CD4-positive, alpha-beta memory T cell (primary cell): ENCODE measurements at regions of chr1 and their contacts with region 1.

Region 1: DNA sequence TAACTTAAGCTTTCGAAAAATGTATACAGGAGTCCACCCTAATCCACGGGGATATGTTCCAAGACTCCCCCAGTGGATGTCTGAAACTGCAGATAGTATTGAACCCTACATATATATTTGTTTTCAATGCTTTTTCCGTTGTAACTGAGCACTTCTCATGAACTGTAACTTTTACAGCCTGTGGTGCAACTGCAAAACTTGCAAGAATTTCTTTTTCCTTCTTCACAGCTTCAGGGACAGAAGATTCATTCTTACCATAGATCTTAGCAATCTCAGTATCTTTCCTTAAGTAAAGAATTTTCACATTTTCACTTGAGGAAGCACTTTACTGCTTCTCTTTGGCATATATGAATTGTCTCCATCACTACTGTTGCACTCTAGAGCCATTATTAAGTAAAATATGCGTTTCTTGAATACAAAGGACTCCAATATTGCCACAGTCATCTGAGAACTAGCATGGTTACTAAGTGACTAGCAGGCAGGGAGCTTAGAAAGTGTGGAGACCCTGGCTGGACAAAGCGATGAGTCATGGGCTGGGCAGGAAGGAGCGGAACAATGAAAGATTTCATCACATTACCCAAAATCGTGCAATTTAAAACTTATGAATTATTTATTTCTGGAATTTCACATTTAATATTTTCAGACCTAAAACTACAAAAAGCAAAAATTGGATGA is 14.1 kb downstream of the DPYD start:
- DNase-seq: no peak
- H3K4me3 ChIP-seq: no peak overlapping the region
- H3K4me3 Mint-ChIP-seq: no peak overlapping the region
- H3K27ac ChIP-seq: no peak overlapping the region
- H3K27ac Mint-ChIP-seq: no peak overlapping the region
- H3K4me1 ChIP-seq: peaks cover 15% of the 10 kb centered on the region
- H3K4me1 Mint-ChIP-seq: peaks cover 24 to 40% (median 32%) of the 10 kb centered on the region in 4 donors
- H3K27me3 ChIP-seq: no peaks in the 10 kb centered on the region
- H3K27me3 Mint-ChIP-seq: no peaks in the 10 kb centered on the region

Region 2: DNA sequence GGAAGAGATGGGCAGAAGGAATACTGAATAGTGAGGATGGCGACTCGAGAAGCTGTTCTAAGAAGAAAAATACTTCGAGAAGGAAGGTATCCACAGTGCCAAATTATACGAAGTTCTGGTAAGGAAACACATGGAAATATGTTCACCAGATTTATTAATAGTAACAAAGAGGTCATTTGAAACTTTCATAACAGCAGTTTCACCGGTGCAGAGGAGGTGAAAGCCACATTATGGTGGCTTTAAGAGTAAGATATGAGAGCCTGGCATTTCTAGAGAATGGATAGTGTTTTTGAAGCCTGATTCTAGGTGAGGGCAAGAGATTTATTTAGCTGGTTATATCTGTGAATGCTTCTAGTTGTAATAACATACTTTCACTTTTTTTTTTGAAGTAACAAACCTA is 42.1 kb before region 1 on chr1:
- CTCF ChIA-PET with region 1: no interaction called
- POLR2A ChIA-PET with region 1: no interaction called
- intact Hi-C with region 1: loop called (anchors 5 kb)
- DNase-seq: no peak
- H3K4me3 ChIP-seq: no peak overlapping the region
- H3K4me3 Mint-ChIP-seq: peak overlapping the region in 3 of 8 donors; percentile 3 to 16 (median 10)
- H3K27ac ChIP-seq: no peak overlapping the region
- H3K27ac Mint-ChIP-seq: peak overlapping the region in 1 of 7 donors; percentile 65
- H3K4me1 ChIP-seq: peaks cover 5% of the 10 kb centered on the region
- H3K4me1 Mint-ChIP-seq: peaks cover 21 to 34% (median 25%) of the 10 kb centered on the region in 4 donors
- H3K27me3 ChIP-seq: no peaks in the 10 kb centered on the region
- H3K27me3 Mint-ChIP-seq: no peaks in the 10 kb centered on the region

Region 3: DNA sequence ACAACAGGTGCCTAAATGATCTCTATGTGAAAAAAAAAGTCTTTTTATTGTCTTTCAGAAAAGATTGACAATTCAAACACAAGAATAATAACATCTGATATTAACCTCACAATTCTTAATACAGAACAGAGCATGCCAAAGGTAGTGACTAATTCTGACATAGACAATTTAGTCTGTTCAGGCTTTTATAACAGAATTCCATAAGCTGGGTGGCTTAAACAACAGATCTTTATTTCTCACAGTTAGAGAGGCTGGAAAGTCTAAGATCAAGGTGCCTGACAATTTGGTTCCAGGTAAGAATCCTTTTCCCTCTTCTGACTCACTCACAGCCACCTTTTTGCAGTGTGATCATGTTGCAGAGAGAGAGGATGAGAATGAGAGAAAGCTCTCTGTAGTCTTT is 12.9 kb before region 1 on chr1:
- CTCF ChIA-PET with region 1: no interaction called
- POLR2A ChIA-PET with region 1: no interaction called
- intact Hi-C with region 1: loop called (anchors 2 kb)
- DNase-seq: no peak
- H3K4me3 ChIP-seq: no peak overlapping the region
- H3K4me3 Mint-ChIP-seq: no peak overlapping the region
- H3K27ac ChIP-seq: no peak overlapping the region
- H3K27ac Mint-ChIP-seq: peak overlapping the region in 1 of 7 donors; percentile 70
- H3K4me1 ChIP-seq: no peaks in the 10 kb centered on the region
- H3K4me1 Mint-ChIP-seq: peaks cover 24 to 34% (median 27%) of the 10 kb centered on the region in 4 donors
- H3K27me3 ChIP-seq: no peaks in the 10 kb centered on the region
- H3K27me3 Mint-ChIP-seq: no peaks in the 10 kb centered on the region

Region 4: DNA sequence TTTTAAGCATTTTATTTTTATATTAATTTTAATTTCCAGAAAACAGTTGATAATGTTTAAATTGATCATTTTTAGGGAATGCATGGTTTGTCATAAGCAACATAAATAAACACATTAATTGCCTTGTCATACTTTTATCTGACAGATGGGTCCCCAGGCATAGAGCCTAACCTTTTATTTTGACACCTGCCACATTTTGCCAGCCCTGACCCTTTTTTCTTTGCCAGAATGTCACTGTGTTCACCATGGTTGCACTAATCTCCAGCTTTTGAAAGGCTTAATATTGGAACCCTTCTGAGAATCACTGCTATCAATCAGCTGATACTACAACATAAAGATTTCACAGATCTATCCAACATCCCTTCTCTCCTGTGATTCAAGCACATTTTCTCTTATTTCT is 70.1 kb after region 1 on chr1:
- CTCF ChIA-PET with region 1: no interaction called
- POLR2A ChIA-PET with region 1: no interaction called
- intact Hi-C with region 1: no loop called
- DNase-seq: no peak
- H3K4me3 ChIP-seq: no peak overlapping the region
- H3K4me3 Mint-ChIP-seq: no peak overlapping the region
- H3K27ac ChIP-seq: no peak overlapping the region
- H3K27ac Mint-ChIP-seq: no peak overlapping the region
- H3K4me1 ChIP-seq: no peaks in the 10 kb centered on the region
- H3K4me1 Mint-ChIP-seq: no peaks in the 10 kb centered on the region
- H3K27me3 ChIP-seq: no peaks in the 10 kb centered on the region
- H3K27me3 Mint-ChIP-seq: no peaks in the 10 kb centered on the region